H1 (cell line): ENCODE measurements at regions of chr9 and their contacts with region 1.

Region 1: GRCh38 chr9:128999576-129000226 is 28.4 kb downstream of the SH3GLB2 start:
- DNase-seq: no peak
- H3K4me3 ChIP-seq: no peak overlapping the region
- H3K27ac ChIP-seq: no peak overlapping the region
- H3K4me1 ChIP-seq: no peaks in the 10 kb centered on the region
- H3K27me3 ChIP-seq: no peaks in the 10 kb centered on the region
- CTCF ChIP-seq: no peak
- EP300 ChIP-seq: no peak
- POLR2A ChIP-seq: no peak
- RAD21 ChIP-seq: no peak

Region 2: GRCh38 chr9:129023036-129023907 is 23.6 kb after region 1 on chr9:
- CTCF ChIA-PET with region 1: interaction called, 89 read pairs
- POLR2A ChIA-PET with region 1: interaction called, 12 read pairs
- DNase-seq: no peak
- H3K4me3 ChIP-seq: no peak overlapping the region
- H3K27ac ChIP-seq: no peak overlapping the region
- H3K4me1 ChIP-seq: peaks cover 0 to 18% (median 11%) of the 10 kb centered on the region in 4 experiments; a peak in 6 of 7 replicates
- H3K27me3 ChIP-seq: no peaks in the 10 kb centered on the region
- CTCF ChIP-seq: no peak
- EP300 ChIP-seq: no peak
- POLR2A ChIP-seq: no peak
- RAD21 ChIP-seq: no peak

Region 3: DNA sequence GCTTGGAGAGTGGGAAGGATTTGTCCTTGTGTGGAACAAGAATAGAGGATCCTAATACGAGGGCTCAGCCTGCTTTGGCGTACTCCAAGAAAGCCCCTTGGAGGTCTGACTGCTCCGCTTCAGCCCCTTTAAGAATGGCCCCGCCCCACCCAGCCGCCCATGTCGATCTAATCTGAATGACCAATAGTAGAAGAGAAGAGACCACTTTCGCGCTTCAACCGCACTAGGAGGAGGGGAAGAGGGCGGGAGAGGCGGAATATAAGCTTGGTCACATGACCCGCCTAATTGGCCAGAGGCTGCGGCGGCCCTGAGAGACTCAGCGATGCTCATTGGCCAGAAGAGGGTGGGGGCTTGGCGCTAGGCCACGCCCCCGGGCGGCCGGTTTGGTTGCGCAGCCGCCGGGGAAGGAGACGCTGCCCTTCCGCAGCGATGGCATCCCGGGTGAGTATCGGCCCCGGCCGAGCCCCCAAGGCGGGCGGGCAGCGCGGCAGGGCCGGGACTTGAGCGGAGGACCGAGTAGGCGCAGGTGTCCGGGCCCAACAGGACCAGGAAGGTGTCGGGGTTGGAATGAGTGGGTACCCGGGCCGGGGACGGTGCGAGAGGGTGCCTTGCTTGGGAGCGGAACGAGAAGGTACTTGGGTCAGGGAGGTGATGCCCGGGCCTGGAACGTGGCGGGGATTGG is 36.7 kb after region 1 on chr9 and contains the start of gene MIGA2:
- CTCF ChIA-PET with region 1: no interaction called
- POLR2A ChIA-PET with region 1: no interaction called
- DNase-seq: peak; percentile 90 to 95
- H3K4me3 ChIP-seq: peak within 1 kb of the TSS; percentile 87 to 97 (median 90)
- H3K27ac ChIP-seq: no peak within 1 kb of the TSS
- H3K4me1 ChIP-seq: peaks cover 0 to 10% (median 5%) of the 10 kb centered on the region in 4 experiments; a peak in 5 of 7 replicates
- H3K27me3 ChIP-seq: no peaks in the 10 kb centered on the region
- CTCF ChIP-seq: peak in 1 of 3 experiments; percentile 8; a peak in 1 of 4 replicates
- EP300 ChIP-seq: 0 out of 3 replicates have a peak, but pooled peaks of 1 of the 2 experiments have one; percentile 55
- POLR2A ChIP-seq: peak in 1 of 2 experiments; percentile 85; a peak in 2 of 3 replicates
- RAD21 ChIP-seq: no peak
- total RNA-seq, gene MIGA2: 30.9 and 39.0 TPM in 2 replicates